ENCODE measurements at regions of chr15 and their contacts with region 1.

Region 1: DNA sequence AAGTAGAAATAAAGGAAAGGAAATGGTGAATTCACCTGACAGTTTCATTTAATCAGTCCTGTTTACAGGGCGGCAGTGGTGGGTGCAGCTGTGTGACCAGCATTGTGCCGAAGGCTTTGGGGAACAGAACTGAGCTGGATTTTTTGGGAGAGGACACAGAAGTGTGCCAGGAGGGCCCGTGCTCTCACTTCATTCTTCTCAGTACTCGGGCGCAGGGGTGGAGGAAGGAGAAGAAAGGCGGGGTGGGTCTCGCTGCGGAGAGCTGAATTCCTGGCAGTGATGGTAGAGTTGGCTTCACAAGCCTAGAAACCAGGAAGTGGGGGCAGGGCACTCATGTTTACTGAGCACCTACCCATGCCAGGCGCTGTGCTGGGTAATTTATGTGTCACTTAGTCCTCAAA is 64.6 kb downstream of the CRTC3 start:
- DNase-seq: peak; percentile 81
- ATAC-seq: peak; percentile 85
- H3K4me3 ChIP-seq: peak overlapping the region; percentile 43; the same call in 1 of the 2 replicates
- H3K27ac ChIP-seq: peak overlapping the region; percentile 58
- H3K4me1 ChIP-seq: peaks cover 31% of the 10 kb centered on the region
- H3K27me3 ChIP-seq: no peaks in the 10 kb centered on the region
- CTCF ChIP-seq: no peak

Region 2: DNA sequence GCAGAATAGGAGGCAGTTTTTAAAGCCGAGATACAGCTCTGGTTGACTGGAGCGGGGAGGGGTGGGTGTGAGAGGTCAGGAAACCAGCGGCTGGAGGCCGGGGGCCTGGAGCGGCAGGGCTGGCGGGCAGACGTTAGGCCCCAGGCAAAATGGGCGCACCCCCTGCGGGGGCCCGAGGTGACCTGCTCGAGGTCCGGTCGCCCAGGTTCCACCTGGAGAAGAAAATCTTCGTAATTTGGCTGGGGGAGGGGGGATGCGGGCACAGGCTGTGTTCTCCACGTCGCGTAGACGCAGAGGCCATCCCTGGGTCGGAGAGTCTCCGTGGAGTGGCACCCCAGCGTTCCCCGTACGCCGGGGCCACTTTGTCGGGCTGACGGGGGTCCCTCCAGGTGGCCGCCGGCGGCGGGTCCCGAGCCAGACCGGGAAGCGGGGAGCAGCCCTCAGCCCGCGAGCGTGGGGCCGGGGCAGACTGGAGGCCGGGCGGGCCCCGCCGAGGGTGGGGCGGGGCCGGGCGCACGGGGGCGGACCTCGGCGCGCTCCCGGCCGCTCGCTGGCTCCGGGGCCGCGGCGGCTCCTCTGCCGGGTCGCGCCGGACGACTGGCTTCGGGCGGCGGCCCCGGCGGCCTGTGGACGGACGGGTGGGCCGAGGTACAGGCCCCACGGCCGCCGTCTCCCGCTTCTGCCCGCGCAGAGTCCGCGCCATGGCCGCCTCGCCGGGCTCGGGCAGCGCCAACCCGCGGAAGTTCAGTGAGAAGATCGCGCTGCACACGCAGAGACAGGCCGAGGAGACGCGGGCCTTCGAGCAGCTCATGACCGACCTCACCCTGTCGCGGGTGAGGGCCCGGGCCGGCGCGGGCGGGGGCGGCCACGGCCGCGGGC is 64.7 kb before region 1 on chr15 and contains the start of gene CRTC3:
- CTCF ChIA-PET with region 1: no interaction called
- POLR2A ChIA-PET with region 1: interaction called, 3 read pairs
- intact Hi-C with region 1: loop called (anchors 2 kb)
- DNase-seq: peak; percentile 42
- ATAC-seq: peak; percentile 82
- H3K4me3 ChIP-seq: peak within 1 kb of the TSS; percentile 85
- H3K27ac ChIP-seq: no peak within 1 kb of the TSS
- H3K4me1 ChIP-seq: peaks cover 15% of the 10 kb centered on the region
- H3K27me3 ChIP-seq: no peaks in the 10 kb centered on the region
- CTCF ChIP-seq: no peak
- total RNA-seq, gene CRTC3: 12.4 and 18.8 TPM in 2 replicates

Region 3: GRCh38 chr15:90610190-90610589 is 15.9 kb after region 1 on chr15:
- CTCF ChIA-PET with region 1: no interaction called
- POLR2A ChIA-PET with region 1: no interaction called
- intact Hi-C with region 1: no loop called
- DNase-seq: peak; percentile 6
- ATAC-seq: no peak
- H3K4me3 ChIP-seq: no peak overlapping the region
- H3K27ac ChIP-seq: 0 out of 2 replicates have a peak overlapping the region, but pooled peaks have one; percentile 12
- H3K4me1 ChIP-seq: no peaks in the 10 kb centered on the region
- H3K27me3 ChIP-seq: no peaks in the 10 kb centered on the region
- CTCF ChIP-seq: no peak

Region 4: DNA sequence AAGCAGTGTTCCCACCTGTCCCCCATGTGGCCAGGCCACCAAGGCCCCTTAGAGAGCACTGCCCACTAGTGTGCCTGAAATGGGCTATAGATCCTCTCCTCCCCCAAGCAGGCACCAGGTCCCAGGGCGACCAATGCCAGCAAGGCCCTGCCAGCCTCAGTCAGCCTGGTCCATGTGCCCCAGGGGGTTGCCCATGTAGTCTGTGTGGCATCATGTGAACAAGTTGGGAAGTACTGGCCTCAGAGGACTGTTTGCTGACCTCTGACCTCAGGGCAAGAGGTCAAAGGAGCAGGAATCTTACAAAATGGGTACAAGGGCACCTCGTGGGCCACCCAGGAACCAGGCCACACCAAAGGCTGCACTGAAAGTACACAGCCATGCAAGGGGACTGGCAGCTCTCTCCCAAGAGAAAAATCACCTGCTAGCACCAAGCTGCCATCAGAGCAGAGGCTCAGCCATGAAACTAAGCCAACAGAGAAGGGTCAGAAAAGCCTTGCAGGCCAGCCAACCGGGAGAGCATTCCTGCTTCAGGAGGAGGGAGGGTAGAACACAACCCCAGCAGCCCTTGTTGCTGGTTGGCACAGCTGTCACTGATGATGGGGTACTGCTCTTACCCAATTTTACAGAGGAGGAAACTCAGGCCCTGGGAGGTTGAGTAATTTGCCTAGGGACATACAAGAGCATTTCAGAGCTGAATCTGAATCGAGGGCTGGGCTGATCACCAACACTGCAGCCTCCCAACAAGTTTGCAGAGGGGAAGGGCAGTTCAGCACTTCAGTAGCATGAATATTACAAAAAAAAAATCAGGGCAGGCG is 268.9 kb after region 1 on chr15:
- CTCF ChIA-PET with region 1: no interaction called
- POLR2A ChIA-PET with region 1: no interaction called
- intact Hi-C with region 1: no loop called
- DNase-seq: peak; percentile 68
- ATAC-seq: no peak
- H3K4me3 ChIP-seq: no peak overlapping the region
- H3K27ac ChIP-seq: peak overlapping the region; percentile 47
- H3K4me1 ChIP-seq: peaks cover 54% of the 10 kb centered on the region
- H3K27me3 ChIP-seq: no peaks in the 10 kb centered on the region
- CTCF ChIP-seq: no peak